Naive thymus-derived CD8-positive, alpha-beta T cell (primary cell): ENCODE measurements at regions of chr19 and their contacts with region 1.

Region 1: GRCh38 chr19:53520550-53521372 is 17.2 kb upstream of the ZNF331 start:
- DNase-seq: peak; percentile 73 to 96 (median 88)
- ATAC-seq: peak; percentile 97 to 99
- H3K4me3 Mint-ChIP-seq: peak overlapping the region; percentile 92 to 100 (median 98)
- H3K27ac Mint-ChIP-seq: peak overlapping the region; percentile 88 to 99 (median 95)
- H3K4me1 Mint-ChIP-seq: peaks cover 13 to 20% (median 15%) of the 10 kb centered on the region in 4 donors
- H3K27me3 Mint-ChIP-seq: no peaks in the 10 kb centered on the region

Region 2: DNA sequence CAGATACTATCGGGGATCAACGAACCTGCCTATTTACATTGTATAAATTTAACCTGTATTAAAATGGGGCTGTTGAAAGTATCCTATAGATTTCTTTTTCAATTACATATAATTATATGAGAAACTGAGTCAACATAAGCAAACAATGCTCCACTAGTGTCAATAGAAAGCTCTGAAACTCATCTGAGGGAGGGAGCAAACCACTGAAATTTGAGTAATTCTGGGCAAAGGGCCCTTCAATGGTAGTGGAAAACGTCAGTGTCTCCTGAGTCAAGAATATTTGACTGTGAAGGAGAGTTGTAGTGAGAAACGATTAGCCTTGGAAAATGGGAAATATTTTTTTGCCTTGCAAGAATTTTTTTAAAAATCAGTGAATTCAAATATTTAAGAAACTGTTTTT is 235.7 kb before region 1 on chr19:
- POLR2A ChIA-PET with region 1: no interaction called
- DNase-seq: no peak
- ATAC-seq: no peak
- H3K4me3 Mint-ChIP-seq: no peak overlapping the region
- H3K27ac Mint-ChIP-seq: no peak overlapping the region
- H3K4me1 Mint-ChIP-seq: no peaks in the 10 kb centered on the region
- H3K27me3 Mint-ChIP-seq: peaks cover 0 to 5% (median 0%) of the 10 kb centered on the region in 5 donors

Region 3: DNA sequence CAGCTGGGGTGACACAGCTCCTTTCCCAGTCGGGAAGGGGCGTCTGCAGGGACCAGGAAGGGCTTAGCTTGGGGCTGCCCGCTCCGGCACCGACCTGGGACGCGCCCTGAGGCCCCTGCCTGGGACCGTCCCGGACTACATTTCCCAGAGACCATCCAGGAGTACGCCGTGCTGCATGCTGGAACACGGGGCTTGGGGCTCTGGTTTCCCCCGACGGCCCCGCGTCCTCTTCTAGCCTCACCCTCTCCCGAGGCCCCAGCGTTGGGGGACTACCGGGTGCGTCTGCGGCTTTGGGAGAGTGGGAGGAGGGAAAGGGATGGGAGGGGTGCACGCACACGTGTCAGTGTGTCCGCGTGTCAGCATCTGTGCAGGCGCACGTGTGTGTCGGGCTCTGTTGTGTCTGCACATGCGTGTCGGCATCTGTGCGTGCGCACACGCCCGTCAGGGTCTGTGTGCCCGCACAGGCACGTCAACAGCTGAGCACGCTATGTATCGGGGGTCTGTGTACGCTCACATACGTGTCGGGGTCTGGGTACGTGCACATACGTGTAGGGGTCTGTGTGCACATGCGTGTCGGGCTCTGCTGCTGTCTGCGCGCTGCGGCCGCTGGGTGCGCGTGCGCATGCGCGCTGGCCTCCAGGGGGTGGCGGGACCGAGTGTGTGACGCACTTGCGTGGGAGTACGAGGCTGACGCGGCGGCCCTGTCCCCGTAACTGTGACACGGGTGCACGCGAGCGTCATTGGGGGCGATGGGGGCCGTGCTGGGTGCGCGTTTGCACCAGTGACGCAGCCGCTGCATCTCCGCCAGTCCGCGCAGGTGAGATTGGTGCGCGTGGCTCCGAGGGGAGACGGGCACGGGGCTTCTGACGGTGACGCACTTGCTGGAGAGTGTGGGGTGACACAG is 17.0 kb after region 1 on chr19 and contains the start of gene ZNF331:
- POLR2A ChIA-PET with region 1: interaction called, 16 read pairs
- DNase-seq: peak; percentile 85 to 96 (median 96)
- ATAC-seq: peak; percentile 76 to 80
- H3K4me3 Mint-ChIP-seq: peak within 1 kb of the TSS; percentile 88 to 98 (median 95)
- H3K27ac Mint-ChIP-seq: peak within 1 kb of the TSS; percentile 95 to 100 (median 100)
- H3K4me1 Mint-ChIP-seq: peaks cover 10 to 46% (median 23%) of the 10 kb centered on the region in 4 donors
- H3K27me3 Mint-ChIP-seq: peaks cover 0 to 4% (median 0%) of the 10 kb centered on the region in 5 donors
- polyA plus RNA-seq, gene ZNF331: 31.1 to 35.2 (median 31.2) TPM